Activated CD8-positive, alpha-beta T cell treated with anti-CD3 and anti-CD28 coated beads, Interleukin-2, amount 10 ng/mL, durations not matched to agents 7 days and 5 days (primary cell): ENCODE measurements at regions of chr3 and their contacts with region 1.

Region 1: GRCh38 chr3:32901432-32902409 is 49.7 kb upstream of the CCR4 start:
- DNase-seq: peak; percentile 45
- ATAC-seq: no peak
- H3K4me3 Mint-ChIP-seq: no peak overlapping the region
- H3K27ac Mint-ChIP-seq: no peak overlapping the region
- H3K4me1 Mint-ChIP-seq: peaks cover 9% of the 10 kb centered on the region
- H3K27me3 Mint-ChIP-seq: peaks cover 25% of the 10 kb centered on the region

Region 2: GRCh38 chr3:32882603-32883025 is 19.1 kb before region 1 on chr3:
- CTCF ChIA-PET with region 1: interaction called, 15 read pairs
- POLR2A ChIA-PET with region 1: no interaction called
- DNase-seq: peak; percentile 40
- ATAC-seq: peak; percentile 97
- H3K4me3 Mint-ChIP-seq: peak overlapping the region; percentile 38
- H3K27ac Mint-ChIP-seq: peak overlapping the region; percentile 67
- H3K4me1 Mint-ChIP-seq: peaks cover 26% of the 10 kb centered on the region
- H3K27me3 Mint-ChIP-seq: peaks cover 23% of the 10 kb centered on the region